Mammary epithelial cell (primary cell): ENCODE measurements at regions of chr16 and their contacts with region 1.

Region 1: DNA sequence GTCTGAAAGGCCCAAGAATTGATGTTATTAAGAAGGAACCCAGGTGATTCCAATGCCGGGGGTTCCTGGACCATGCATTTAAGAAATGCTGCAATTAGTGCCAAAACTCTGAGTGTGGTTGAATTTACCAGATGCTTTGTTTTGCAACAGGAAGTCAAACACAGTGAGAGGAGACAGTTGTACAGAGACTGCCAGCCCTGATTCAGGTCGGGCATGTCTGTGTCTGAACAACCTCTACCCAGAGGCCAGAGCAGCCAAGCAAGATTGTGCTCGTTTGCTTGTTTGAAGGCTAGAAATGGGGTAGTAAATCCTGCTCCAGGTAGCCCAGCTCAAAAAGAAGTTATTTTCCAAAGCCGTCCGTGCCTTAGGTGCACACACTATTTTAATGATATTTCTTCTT is 412.4 kb upstream of the ERCC4 start:
- DNase-seq: peak; percentile 25
- H3K4me3 ChIP-seq: no peak overlapping the region
- H3K27ac ChIP-seq: no peak overlapping the region
- H3K4me1 ChIP-seq: no peaks in the 10 kb centered on the region
- H3K27me3 ChIP-seq: no peaks in the 10 kb centered on the region
- CTCF ChIP-seq: no peak

Region 2: GRCh38 chr16:13606804-13607203 is 99.3 kb after region 1 on chr16:
- CTCF ChIA-PET with region 1: no interaction called
- dilution Hi-C with region 1: loop called (anchors 5 kb)
- in situ Hi-C with region 1: no loop called
- intact Hi-C with region 1: no loop called
- DNase-seq: no peak
- H3K4me3 ChIP-seq: no peak overlapping the region
- H3K27ac ChIP-seq: no peak overlapping the region
- H3K4me1 ChIP-seq: no peaks in the 10 kb centered on the region
- H3K27me3 ChIP-seq: no peaks in the 10 kb centered on the region
- CTCF ChIP-seq: no peak